Naive thymus-derived CD4-positive, alpha-beta T cell (primary cell): ENCODE measurements at regions of chr19 and their contacts with region 1.

Region 1: DNA sequence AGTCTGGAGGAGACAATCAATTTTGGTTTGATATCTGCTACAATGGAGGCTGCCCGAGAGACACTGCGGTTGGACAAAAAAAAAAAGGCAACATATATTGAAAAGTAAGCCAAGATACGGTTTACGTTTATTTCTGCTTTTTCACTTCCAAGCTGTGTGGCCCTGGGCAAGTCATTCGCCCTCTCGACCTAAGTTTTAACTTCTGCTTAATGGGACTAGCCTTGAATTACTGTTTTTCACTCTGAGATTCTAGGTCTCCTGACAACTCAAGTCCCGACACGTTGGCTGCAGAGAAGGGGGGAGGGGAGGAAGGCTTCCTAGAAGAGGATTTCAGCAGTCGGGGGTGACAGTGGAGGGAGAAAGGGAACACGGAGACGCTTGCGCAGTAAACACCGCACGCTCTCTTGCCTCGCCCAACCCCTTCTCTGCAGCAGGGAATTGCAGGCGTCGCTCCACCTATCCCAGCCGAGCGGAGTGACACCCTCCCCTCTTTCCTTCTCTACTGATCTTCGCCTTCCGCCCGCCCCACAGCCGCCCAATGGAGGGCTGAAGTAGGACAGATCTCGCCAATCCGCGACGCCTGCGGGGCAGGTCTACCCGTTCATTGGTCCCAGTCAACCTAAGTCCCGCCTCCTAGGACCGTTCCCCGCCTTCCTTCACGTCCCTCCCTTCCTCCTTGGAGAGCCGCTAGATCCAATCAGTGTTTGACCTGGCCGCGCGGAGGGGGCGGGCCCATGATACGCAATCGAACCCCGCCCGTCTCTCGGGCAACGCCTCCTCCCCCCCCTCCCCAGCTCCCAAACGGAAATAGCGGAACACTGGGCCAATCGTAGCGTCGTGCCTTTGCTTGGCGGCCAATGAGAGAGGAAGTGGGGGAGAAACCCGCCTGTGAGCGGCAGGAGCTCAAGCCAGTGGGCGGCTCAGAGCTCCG is 529 bp upstream of the AP2A1 start:
- DNase-seq: peak; percentile 86 to 100 (median 99)
- ATAC-seq: peak; percentile 92
- H3K4me3 ChIP-seq: peak overlapping the region; percentile 79
- H3K4me3 Mint-ChIP-seq: peak overlapping the region; percentile 89 to 98 (median 96)
- H3K27ac ChIP-seq: peak overlapping the region; percentile 80
- H3K27ac Mint-ChIP-seq: peak overlapping the region; percentile 84 to 98 (median 96)
- H3K4me1 ChIP-seq: peaks cover 11 to 16% of the 10 kb centered on the region in 2 donors
- H3K4me1 Mint-ChIP-seq: peaks cover 15 to 43% (median 36%) of the 10 kb centered on the region in 7 donors
- H3K27me3 ChIP-seq: no peaks in the 10 kb centered on the region
- H3K27me3 Mint-ChIP-seq: no peaks in the 10 kb centered on the region

Region 2: GRCh38 chr19:49487277-49488045 is 278.8 kb before region 1 on chr19 and contains the start of gene RPL13A:
- CTCF ChIA-PET with region 1: no interaction called
- POLR2A ChIA-PET with region 1: no interaction called
- intact Hi-C with region 1: loop called in 1 of 2 experiments (anchors 1 kb)
- DNase-seq: peak; percentile 97 to 99 (median 99)
- ATAC-seq: peak; percentile 94
- H3K4me3 ChIP-seq: peak within 1 kb of the TSS; percentile 100
- H3K4me3 Mint-ChIP-seq: peak within 1 kb of the TSS; percentile 95 to 99 (median 98)
- H3K27ac ChIP-seq: peak within 1 kb of the TSS; percentile 92
- H3K27ac Mint-ChIP-seq: peak within 1 kb of the TSS; percentile 89 to 99 (median 96)
- H3K4me1 ChIP-seq: peaks cover 19 to 26% of the 10 kb centered on the region in 2 donors
- H3K4me1 Mint-ChIP-seq: peaks cover 27 to 52% (median 42%) of the 10 kb centered on the region in 7 donors
- H3K27me3 ChIP-seq: no peaks in the 10 kb centered on the region
- H3K27me3 Mint-ChIP-seq: peaks cover 0 to 9% (median 0%) of the 10 kb centered on the region in 5 donors
- total RNA-seq, gene RPL13A: 2,467 to 6,044 (median 5,762) TPM

Region 3: DNA sequence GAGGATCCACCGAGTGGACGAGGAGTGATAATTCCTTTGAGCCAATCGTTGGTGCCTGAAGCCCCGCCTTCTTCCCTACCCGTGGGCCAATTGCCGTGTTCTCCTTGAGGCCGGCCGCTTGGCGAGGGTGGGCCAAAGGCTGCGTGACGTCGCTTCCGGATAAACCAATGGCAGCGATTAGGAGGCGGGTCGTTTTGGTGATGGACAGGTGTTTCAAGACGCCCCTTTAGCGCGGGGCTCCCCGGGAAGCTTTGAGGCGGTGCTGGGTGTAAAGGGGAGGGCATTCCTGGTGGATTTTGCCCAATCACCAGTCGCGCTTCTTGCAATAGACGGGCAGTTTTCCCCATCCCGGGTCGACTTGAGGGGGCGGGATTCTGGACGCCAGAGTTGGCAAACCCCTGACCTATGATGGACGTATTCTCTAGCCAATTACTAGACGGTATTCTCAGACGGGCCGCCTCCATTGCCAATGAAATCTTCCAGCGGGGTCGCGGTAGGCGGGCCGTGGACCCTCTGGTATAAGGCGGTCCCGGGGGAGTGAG is 89.5 kb before region 1 on chr19:
- CTCF ChIA-PET with region 1: interaction called, 3 read pairs
- POLR2A ChIA-PET with region 1: no interaction called
- intact Hi-C with region 1: loop called (anchors 1 to 2 kb)
- DNase-seq: peak; percentile 84 to 99 (median 97)
- ATAC-seq: peak; percentile 87
- H3K4me3 ChIP-seq: peak overlapping the region; percentile 86
- H3K4me3 Mint-ChIP-seq: peak overlapping the region; percentile 91 to 100 (median 98)
- H3K27ac ChIP-seq: peak overlapping the region; percentile 95
- H3K27ac Mint-ChIP-seq: peak overlapping the region; percentile 93 to 100 (median 99)
- H3K4me1 ChIP-seq: peaks cover 18 to 23% of the 10 kb centered on the region in 2 donors
- H3K4me1 Mint-ChIP-seq: peaks cover 18 to 50% (median 43%) of the 10 kb centered on the region in 7 donors
- H3K27me3 ChIP-seq: no peaks in the 10 kb centered on the region
- H3K27me3 Mint-ChIP-seq: no peaks in the 10 kb centered on the region

Region 4: GRCh38 chr19:49710372-49710951 is 55.8 kb before region 1 on chr19:
- CTCF ChIA-PET with region 1: no interaction called
- POLR2A ChIA-PET with region 1: no interaction called
- intact Hi-C with region 1: no loop called
- DNase-seq: no peak
- ATAC-seq: no peak
- H3K4me3 ChIP-seq: no peak overlapping the region
- H3K4me3 Mint-ChIP-seq: no peak overlapping the region
- H3K27ac ChIP-seq: no peak overlapping the region
- H3K27ac Mint-ChIP-seq: no peak overlapping the region
- H3K4me1 ChIP-seq: no peaks in the 10 kb centered on the region
- H3K4me1 Mint-ChIP-seq: peaks cover 0 to 6% (median 0%) of the 10 kb centered on the region in 7 donors
- H3K27me3 ChIP-seq: no peaks in the 10 kb centered on the region
- H3K27me3 Mint-ChIP-seq: peaks cover 0 to 8% (median 0%) of the 10 kb centered on the region in 5 donors

Region 5: DNA sequence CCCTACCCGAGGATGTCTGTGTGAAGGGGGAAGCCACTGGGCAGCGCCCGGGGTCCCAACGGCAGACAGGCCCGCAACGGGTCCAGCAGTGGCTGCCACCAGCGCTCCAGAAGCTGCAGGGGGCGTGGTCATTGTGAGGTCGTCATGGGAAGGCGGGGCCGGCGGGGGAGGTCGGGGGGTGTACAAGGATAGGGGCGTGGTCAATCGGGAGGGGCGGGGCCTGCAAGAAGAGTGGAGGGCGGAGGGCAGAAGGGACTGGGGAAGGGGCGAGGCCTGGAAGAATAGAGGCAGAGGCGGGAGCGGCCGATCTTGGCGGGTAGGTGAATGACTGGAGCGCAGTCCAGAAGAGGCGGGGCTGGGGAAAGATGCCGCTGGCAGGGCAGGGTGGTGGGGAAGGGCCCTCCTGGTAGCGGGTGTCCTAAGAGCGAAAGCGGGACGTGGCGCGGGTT is 42.5 kb after region 1 on chr19:
- CTCF ChIA-PET with region 1: no interaction called
- POLR2A ChIA-PET with region 1: interaction called, 10 read pairs
- intact Hi-C with region 1: loop called (anchors 1 kb)
- DNase-seq: peak; percentile 69 to 92 (median 83)
- ATAC-seq: peak; percentile 76
- H3K4me3 ChIP-seq: peak overlapping the region; percentile 71
- H3K4me3 Mint-ChIP-seq: peak overlapping the region; percentile 85 to 96 (median 90)
- H3K27ac ChIP-seq: peak overlapping the region; percentile 73
- H3K27ac Mint-ChIP-seq: peak overlapping the region; percentile 66 to 94 (median 84)
- H3K4me1 ChIP-seq: peaks cover 11 to 16% of the 10 kb centered on the region in 2 donors
- H3K4me1 Mint-ChIP-seq: peaks cover 20 to 39% (median 28%) of the 10 kb centered on the region in 7 donors
- H3K27me3 ChIP-seq: no peaks in the 10 kb centered on the region
- H3K27me3 Mint-ChIP-seq: no peaks in the 10 kb centered on the region

Region 6: DNA sequence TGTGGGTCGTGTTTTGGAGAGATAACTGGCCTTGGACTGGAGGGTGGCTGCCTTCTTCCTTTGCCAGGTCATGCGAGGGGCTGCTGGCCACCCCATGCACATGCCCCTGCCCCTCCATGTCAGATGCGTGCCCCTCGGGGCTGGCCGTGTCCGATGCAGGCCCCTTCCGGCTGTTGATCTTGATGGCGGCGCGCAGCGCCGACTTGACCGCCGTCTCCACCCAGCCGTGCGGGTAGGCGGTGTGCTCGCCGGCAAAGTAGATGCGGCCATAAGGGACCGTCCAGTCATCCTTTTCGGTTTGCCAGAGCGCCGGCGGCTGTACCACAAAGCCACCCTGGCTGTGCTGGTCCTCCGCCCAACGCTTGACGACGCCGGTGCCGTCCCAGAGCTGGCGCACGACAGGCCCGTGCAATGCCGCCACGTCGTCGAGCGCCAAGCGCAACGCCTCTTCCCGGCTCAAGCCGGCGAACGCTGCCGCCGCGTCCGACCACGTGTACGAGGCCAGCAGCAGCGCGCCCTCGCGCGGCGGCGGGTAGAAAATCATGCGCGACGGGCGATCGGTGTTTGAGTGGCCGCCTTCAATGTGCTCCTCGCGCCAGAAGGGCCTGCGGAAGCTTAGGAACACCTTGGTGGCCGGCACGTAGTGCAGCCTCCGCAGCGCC is 123.5 kb after region 1 on chr19:
- CTCF ChIA-PET with region 1: no interaction called
- POLR2A ChIA-PET with region 1: no interaction called
- intact Hi-C with region 1: loop called in 1 of 2 experiments (anchors 1 kb)
- DNase-seq: peak; percentile 56 to 81 (median 75)
- ATAC-seq: peak; percentile 87
- H3K4me3 ChIP-seq: peak overlapping the region; percentile 69
- H3K4me3 Mint-ChIP-seq: peak overlapping the region; percentile 70 to 84 (median 79)
- H3K27ac ChIP-seq: no peak overlapping the region
- H3K27ac Mint-ChIP-seq: peak overlapping the region in 5 of 9 donors; percentile 25 to 79 (median 51)
- H3K4me1 ChIP-seq: peaks cover 0 to 5% of the 10 kb centered on the region in 2 donors
- H3K4me1 Mint-ChIP-seq: peaks cover 0 to 16% (median 3%) of the 10 kb centered on the region in 7 donors
- H3K27me3 ChIP-seq: no peaks in the 10 kb centered on the region
- H3K27me3 Mint-ChIP-seq: no peaks in the 10 kb centered on the region

Region 7: DNA sequence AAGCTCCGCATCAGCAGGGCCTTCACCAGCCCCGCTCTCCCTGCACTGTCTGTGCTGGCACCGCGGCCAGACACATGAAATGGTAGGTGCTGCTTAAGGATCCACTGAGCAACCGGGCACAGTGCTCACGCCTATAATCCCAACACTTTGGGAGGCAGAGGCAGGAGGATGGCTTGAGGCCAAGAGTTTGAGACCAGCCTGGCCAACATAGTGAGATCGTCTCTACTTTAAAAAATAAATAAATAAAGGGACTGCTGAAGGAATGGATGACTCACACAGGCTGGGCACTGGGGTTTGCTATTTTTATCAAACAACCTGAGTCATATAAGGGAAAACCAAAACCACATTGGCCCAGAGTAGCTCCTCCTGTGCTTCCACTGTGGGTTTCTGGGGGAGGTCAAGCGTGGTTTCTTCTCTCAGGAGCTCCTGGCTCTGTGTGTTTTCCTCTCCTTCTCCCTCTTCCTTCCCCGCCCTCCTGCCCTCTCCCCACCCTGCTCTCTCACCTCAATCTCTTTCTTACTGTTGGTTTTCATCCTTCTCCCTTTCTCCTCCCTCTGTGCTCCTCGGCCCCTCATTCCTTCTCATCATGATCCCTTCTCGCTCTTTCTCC is 237.6 kb after region 1 on chr19:
- CTCF ChIA-PET with region 1: no interaction called
- POLR2A ChIA-PET with region 1: no interaction called
- intact Hi-C with region 1: no loop called
- DNase-seq: peak in 1 of 9 donors; percentile 56
- ATAC-seq: peak; percentile 68
- H3K4me3 ChIP-seq: no peak overlapping the region
- H3K4me3 Mint-ChIP-seq: peak overlapping the region in 1 of 10 donors; percentile 70
- H3K27ac ChIP-seq: no peak overlapping the region
- H3K27ac Mint-ChIP-seq: peak overlapping the region in 4 of 9 donors; percentile 7 to 61 (median 37)
- H3K4me1 ChIP-seq: no peaks in the 10 kb centered on the region
- H3K4me1 Mint-ChIP-seq: peaks cover 0 to 23% (median 0%) of the 10 kb centered on the region in 7 donors
- H3K27me3 ChIP-seq: no peaks in the 10 kb centered on the region
- H3K27me3 Mint-ChIP-seq: no peaks in the 10 kb centered on the region

Region 8: GRCh38 chr19:51108066-51108804 is 1342.0 kb after region 1 on chr19 and contains the start of gene CTU1:
- CTCF ChIA-PET with region 1: no interaction called
- POLR2A ChIA-PET with region 1: no interaction called
- intact Hi-C with region 1: loop called in 1 of 2 experiments (anchors 5 kb)
- DNase-seq: peak; percentile 93 to 99 (median 98)
- ATAC-seq: peak; percentile 99
- H3K4me3 ChIP-seq: peak within 1 kb of the TSS; percentile 92
- H3K4me3 Mint-ChIP-seq: peak within 1 kb of the TSS; percentile 90 to 100 (median 98)
- H3K27ac ChIP-seq: peak within 1 kb of the TSS; percentile 77
- H3K27ac Mint-ChIP-seq: peak within 1 kb of the TSS; percentile 92 to 99 (median 97)
- H3K4me1 ChIP-seq: peaks cover 13% of the 10 kb centered on the region in 2 donors
- H3K4me1 Mint-ChIP-seq: peaks cover 28 to 48% (median 42%) of the 10 kb centered on the region in 7 donors
- H3K27me3 ChIP-seq: no peaks in the 10 kb centered on the region
- H3K27me3 Mint-ChIP-seq: no peaks in the 10 kb centered on the region
- total RNA-seq, gene CTU1: 3.3 to 11.8 (median 10.5) TPM